Heart left ventricle (tissue), 16 donors: ENCODE measurements at regions of chr20 and their contacts with region 1.

Region 1: GRCh38 chr20:59583428-59584045 is 20.8 kb upstream of the PHACTR3 start:
- DNase-seq: peak; percentile 59 to 87 (median 81)
- ATAC-seq: peak in 3 of 4 donors; percentile 16 to 80 (median 77)
- H3K4me3 ChIP-seq: peak overlapping the region in 1 of 12 donors; percentile 5
- H3K27ac ChIP-seq: peak overlapping the region in 3 of 12 donors; percentile 17 to 60 (median 44)
- H3K4me1 ChIP-seq: peaks cover 0 to 26% (median 10%) of the 10 kb centered on the region in 12 donors
- H3K27me3 ChIP-seq: peaks cover 0 to 9% (median 3%) of the 10 kb centered on the region in 9 donors
- CTCF ChIP-seq: no peak
- POLR2A ChIP-seq: no peak

Region 2: GRCh38 chr20:59253779-59254319 is 329.7 kb before region 1 on chr20:
- intact Hi-C with region 1: no loop called
- DNase-seq: no peak
- ATAC-seq: no peak
- H3K4me3 ChIP-seq: no peak overlapping the region
- H3K27ac ChIP-seq: no peak overlapping the region
- H3K4me1 ChIP-seq: peaks cover 0 to 7% (median 0%) of the 10 kb centered on the region in 12 donors
- H3K27me3 ChIP-seq: peaks cover 0 to 43% (median 4%) of the 10 kb centered on the region in 9 donors
- CTCF ChIP-seq: no peak
- POLR2A ChIP-seq: no peak

Region 3: GRCh38 chr20:59495894-59496510 is 87.5 kb before region 1 on chr20:
- intact Hi-C with region 1: no loop called
- DNase-seq: peak; percentile 50 to 77 (median 62)
- ATAC-seq: peak in 3 of 4 donors; percentile 56 to 64 (median 60)
- H3K4me3 ChIP-seq: no peak overlapping the region
- H3K27ac ChIP-seq: no peak overlapping the region
- H3K4me1 ChIP-seq: peaks cover 0 to 5% (median 0%) of the 10 kb centered on the region in 12 donors
- H3K27me3 ChIP-seq: peaks cover 0 to 40% (median 8%) of the 10 kb centered on the region in 9 donors
- CTCF ChIP-seq: peak; percentile 74 to 90 (median 84)
- POLR2A ChIP-seq: no peak

Region 4: DNA sequence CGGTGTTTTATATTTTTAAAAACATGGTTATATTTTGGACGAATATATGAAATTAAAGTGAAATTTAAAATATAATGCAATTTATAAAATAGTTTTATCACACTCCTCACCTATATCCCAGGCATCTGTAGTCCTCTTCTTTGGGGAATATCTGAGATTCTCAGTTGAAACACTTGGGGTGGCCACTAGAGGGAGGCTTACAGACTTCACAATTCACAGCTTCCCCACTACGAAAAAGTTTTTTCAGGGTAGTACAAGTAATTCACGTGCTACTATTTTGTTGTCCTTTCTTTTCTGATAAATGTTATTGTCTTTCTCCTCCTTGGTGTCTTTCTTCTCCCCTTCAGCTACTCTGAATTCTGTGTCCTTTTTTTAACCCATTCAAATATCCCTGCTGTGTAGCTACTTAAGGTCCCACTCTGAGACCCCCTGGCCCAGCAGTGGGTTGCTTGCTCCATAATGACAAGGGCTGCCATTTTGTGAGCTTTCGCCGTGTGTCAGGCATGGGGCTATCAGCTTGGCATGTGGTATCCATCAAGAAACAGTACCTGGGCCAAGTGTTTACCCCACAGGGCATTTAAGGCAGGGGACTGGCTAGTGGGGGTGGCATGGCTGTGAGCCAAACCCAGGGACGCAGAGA is 22.8 kb before region 1 on chr20:
- intact Hi-C with region 1: loop called in 1 of 10 experiments (anchors 1 kb)
- DNase-seq: no peak
- ATAC-seq: no peak
- H3K4me3 ChIP-seq: no peak overlapping the region
- H3K27ac ChIP-seq: no peak overlapping the region
- H3K4me1 ChIP-seq: no peaks in the 10 kb centered on the region
- H3K27me3 ChIP-seq: peaks cover 0 to 25% (median 0%) of the 10 kb centered on the region in 9 donors
- CTCF ChIP-seq: peak; percentile 34 to 67 (median 52)
- POLR2A ChIP-seq: no peak

Region 5: DNA sequence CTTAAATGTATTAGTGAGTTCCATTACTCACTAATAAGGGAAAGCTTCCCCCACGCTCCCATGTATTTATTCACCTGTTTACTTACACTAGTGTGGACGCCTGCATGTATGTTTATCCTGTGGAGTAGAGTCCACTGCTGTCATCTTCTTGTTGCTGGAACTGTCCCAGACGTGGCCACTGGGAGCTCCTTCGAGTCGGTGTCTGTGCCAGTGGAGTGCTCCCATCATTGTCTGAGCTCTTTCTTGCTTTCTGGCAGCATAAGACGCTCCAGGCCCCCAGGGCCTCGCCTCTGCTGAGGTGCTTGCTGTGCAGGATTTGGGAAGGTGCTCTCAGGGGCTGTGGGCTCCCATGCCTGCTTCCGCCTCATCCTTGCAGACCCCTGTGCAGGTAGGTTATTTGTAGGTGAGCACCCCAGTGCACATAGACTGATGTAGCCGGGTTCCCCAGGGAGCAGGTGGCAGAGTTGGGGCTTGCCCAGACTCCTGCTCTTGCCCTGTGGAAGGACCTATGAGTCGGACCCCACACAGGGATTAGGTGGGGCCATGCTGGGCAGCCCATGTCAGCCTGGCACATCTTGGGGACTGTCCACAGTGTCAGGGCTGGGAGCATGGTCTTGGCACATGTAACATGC is 37.4 kb after region 1 on chr20:
- intact Hi-C with region 1: no loop called
- DNase-seq: no peak
- ATAC-seq: no peak
- H3K4me3 ChIP-seq: no peak overlapping the region
- H3K27ac ChIP-seq: no peak overlapping the region
- H3K4me1 ChIP-seq: no peaks in the 10 kb centered on the region
- H3K27me3 ChIP-seq: peaks cover 0 to 12% (median 0%) of the 10 kb centered on the region in 9 donors
- CTCF ChIP-seq: no peak
- POLR2A ChIP-seq: no peak

Region 6: DNA sequence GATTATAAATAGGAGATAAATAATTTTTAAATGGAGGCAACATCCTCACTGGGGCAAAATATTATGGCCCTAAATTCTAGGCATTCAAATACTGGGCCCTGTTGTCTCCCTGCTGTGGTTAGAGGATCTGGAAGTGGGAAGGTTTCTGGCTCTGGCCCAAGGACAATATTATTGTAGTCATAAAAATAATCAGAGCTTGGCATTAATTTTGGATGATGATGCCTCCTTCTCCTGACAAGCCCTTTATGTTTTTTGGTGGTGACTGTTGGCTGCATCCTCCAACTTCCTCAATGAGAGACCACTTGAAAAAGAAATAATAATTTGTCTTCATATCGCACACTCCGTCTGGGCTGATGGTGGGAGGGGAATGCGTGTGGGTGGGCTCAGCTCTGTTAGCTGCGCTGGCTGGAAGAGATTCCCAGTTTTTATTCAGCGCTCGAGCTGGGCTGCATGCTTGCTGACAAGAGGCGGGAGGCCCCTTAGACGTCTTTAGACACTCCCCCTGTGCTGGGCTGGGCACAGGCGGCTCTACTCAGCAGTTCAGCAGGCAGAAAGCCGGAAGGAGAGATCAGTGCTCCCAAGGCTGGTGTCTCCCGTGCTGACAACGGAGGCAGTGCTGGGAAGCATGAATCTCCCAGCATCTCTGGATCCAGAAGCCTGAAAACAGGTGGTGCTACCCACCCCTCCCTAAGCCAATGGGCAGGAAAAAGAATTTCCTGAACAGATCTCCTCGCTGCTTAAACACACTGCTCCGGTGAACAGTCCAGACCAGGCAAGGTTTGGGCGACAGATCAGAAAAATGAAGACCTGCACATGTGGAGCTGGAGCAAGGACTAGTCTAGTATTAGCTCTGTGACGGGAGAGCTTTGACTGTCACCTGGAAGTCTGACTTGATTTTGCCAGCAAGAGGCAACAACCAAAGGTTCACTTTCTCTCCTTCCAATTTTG is 252.2 kb after region 1 on chr20:
- intact Hi-C with region 1: loop called in 2 of 10 experiments (anchors 10 kb)
- DNase-seq: peak in 4 of 5 donors; percentile 37 to 63 (median 52)
- ATAC-seq: peak; percentile 60 to 79 (median 76)
- H3K4me3 ChIP-seq: peak overlapping the region in 10 of 12 donors; percentile 1 to 50 (median 34)
- H3K27ac ChIP-seq: peak overlapping the region in 6 of 12 donors; percentile 24 to 70 (median 50)
- H3K4me1 ChIP-seq: peaks cover 0 to 55% (median 24%) of the 10 kb centered on the region in 12 donors
- H3K27me3 ChIP-seq: no peaks in the 10 kb centered on the region
- CTCF ChIP-seq: no peak
- POLR2A ChIP-seq: no peak